ENCODE measurements at regions of chr12 and their contacts with region 1.

Region 1: GRCh38 chr12:43835656-43836474 is at the start of gene TMEM117:
- DNase-seq: peak; percentile 67
- H3K4me3 Mint-ChIP-seq: peak within 1 kb of the TSS; percentile 74
- H3K27ac Mint-ChIP-seq: peak within 1 kb of the TSS; percentile 66
- H3K4me1 Mint-ChIP-seq: peaks cover 44% of the 10 kb centered on the region
- H3K27me3 Mint-ChIP-seq: no peaks in the 10 kb centered on the region
- total RNA-seq, gene TMEM117: 1.7 TPM

Region 2: GRCh38 chr12:43805860-43806736 is 29.8 kb before region 1 on chr12 and contains the start of gene TWF1:
- CTCF ChIA-PET with region 1: interaction called, 7 read pairs
- POLR2A ChIA-PET with region 1: interaction called, 17 read pairs
- intact Hi-C with region 1: loop called (anchors 1 kb)
- DNase-seq: peak; percentile 91
- H3K4me3 Mint-ChIP-seq: peak within 1 kb of the TSS; percentile 99
- H3K27ac Mint-ChIP-seq: peak within 1 kb of the TSS; percentile 99
- H3K4me1 Mint-ChIP-seq: peaks cover 31% of the 10 kb centered on the region
- H3K27me3 Mint-ChIP-seq: no peaks in the 10 kb centered on the region
- total RNA-seq, gene TWF1: 19.1 to 19.4 TPM